ENCODE measurements at regions of chr11 and their contacts with region 1.

Region 1: GRCh38 chr11:5151713-5152153 is 2.8 kb downstream of the OR52A1 start:
- DNase-seq: no peak
- H3K4me3 Mint-ChIP-seq: no peak overlapping the region
- H3K27ac Mint-ChIP-seq: no peak overlapping the region
- H3K4me1 Mint-ChIP-seq: no peaks in the 10 kb centered on the region
- H3K27me3 Mint-ChIP-seq: no peaks in the 10 kb centered on the region

Region 2: GRCh38 chr11:5178046-5178837 is 26.5 kb after region 1 on chr11:
- intact Hi-C with region 1: loop called (anchors 1 kb)
- DNase-seq: no peak
- H3K4me3 Mint-ChIP-seq: no peak overlapping the region
- H3K27ac Mint-ChIP-seq: no peak overlapping the region
- H3K4me1 Mint-ChIP-seq: no peaks in the 10 kb centered on the region
- H3K27me3 Mint-ChIP-seq: no peaks in the 10 kb centered on the region

Region 3: DNA sequence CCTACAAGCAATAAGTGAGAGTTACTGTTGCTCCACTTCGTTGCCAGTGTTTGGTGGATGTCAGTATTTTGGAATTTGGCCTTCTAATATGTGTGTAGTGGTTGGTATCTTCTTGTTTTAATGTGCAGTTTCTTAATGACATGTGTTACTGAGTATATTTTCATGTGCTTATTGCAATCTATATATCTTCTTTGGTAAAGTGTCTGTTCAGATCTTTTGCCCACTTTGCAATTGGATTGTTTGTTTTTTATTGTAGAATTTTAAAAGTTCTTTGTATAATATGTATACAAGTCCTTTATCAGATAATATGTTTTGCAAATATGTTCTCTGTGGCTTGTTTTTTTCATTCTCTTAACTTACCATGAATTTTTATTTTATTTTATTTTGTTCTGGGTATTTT is 41.0 kb after region 1 on chr11:
- intact Hi-C with region 1: no loop called
- DNase-seq: no peak
- H3K4me3 Mint-ChIP-seq: no peak overlapping the region
- H3K27ac Mint-ChIP-seq: no peak overlapping the region
- H3K4me1 Mint-ChIP-seq: no peaks in the 10 kb centered on the region
- H3K27me3 Mint-ChIP-seq: no peaks in the 10 kb centered on the region

Region 4: DNA sequence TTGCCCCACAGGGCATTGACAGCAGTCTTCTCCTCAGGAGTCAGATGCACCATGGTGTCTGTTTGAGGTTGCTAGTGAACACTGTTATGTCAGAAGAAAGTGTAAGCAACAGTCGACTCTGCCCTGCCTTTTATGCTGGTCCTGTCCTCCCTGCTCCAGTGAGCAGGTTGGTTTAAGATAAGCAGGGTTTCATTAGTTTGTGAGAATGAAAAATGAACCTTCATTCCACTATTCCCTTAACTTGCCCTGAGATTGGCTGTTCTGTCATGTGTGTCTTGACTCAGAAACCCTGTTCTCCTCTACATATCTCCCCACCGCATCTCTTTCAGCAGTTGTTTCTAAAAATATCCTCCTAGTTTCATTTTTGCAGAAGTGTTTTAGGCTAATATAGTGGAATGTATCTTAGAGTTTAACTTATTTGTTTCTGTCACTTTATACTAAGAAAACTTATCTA is 82.7 kb after region 1 on chr11 and contains the start of gene HBD:
- intact Hi-C with region 1: no loop called
- DNase-seq: no peak
- H3K4me3 Mint-ChIP-seq: no peak within 1 kb of the TSS
- H3K27ac Mint-ChIP-seq: no peak within 1 kb of the TSS
- H3K4me1 Mint-ChIP-seq: peaks cover 8% of the 10 kb centered on the region
- H3K27me3 Mint-ChIP-seq: no peaks in the 10 kb centered on the region
- total RNA-seq, gene HBD: not detected in 2 replicates